Testis (tissue), 5 donors: ENCODE measurements at regions of chr19 and their contacts with region 1.

Region 1: DNA sequence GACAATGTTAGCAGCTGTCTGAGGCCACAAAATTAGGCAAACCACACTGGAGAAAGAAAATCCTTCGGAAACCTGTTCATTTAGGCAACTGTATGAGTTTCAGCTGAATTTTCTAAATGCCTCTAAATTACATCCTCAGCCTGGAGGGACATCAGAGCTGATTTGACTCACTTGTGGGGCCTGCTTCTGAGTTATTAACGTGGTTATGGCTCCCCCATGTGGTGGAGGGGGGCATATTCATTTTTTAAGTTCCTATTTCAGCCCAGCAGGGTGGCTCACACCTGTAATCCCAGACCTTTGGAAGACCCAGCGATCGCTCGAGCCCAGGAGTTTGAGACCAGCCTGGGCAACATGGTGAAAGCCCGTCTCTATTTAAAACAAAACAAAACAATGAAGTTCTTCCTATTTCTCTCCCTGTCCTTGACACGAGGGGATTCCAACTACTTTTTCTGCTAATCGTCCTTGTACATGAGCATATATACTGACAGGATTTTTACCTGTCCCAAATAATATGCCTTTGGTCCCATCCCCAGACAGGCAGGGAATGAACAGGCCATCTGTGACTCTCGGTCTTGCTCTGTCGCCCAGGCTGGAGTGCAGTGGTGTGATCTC is 31.5 kb upstream of the HIF3A start:
- DNase-seq: peak; percentile 82
- H3K4me3 ChIP-seq: no peak overlapping the region
- H3K27ac ChIP-seq: no peak overlapping the region
- H3K4me1 ChIP-seq: no peaks in the 10 kb centered on the region
- H3K27me3 ChIP-seq: no peaks in the 10 kb centered on the region
- CTCF ChIP-seq: peak; percentile 74 to 93 (median 89)
- POLR2A ChIP-seq: no peak

Region 2: DNA sequence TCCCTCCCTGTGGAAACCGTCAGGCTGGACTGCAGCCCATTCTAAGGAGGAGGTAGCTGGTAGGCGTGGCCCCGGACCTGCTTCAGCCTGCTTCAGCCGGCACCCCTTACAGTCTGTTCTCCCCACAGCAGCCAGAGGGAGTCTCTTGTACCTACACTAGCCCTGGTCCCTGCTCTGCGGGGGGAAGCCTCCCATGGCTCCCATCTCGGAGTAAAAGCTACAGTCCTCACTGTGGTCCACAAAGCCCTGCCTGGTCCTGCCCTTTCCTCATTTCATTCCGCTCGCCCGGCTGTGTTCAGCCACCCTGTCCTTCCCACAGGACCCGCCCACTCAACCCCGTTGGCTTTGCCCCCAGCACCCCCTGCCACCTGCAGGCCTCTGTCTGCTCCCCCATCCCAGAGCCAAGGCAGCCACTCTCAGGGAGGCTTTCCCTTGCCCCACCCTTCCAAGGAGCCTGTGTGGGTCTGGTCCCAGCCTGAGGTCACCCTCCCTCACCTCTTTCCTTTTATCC is 243.7 kb before region 1 on chr19:
- intact Hi-C with region 1: loop called (anchors 10 kb)
- DNase-seq: no peak
- H3K4me3 ChIP-seq: no peak overlapping the region
- H3K27ac ChIP-seq: no peak overlapping the region
- H3K4me1 ChIP-seq: no peaks in the 10 kb centered on the region
- H3K27me3 ChIP-seq: no peaks in the 10 kb centered on the region
- CTCF ChIP-seq: no peak
- POLR2A ChIP-seq: no peak

Region 3: DNA sequence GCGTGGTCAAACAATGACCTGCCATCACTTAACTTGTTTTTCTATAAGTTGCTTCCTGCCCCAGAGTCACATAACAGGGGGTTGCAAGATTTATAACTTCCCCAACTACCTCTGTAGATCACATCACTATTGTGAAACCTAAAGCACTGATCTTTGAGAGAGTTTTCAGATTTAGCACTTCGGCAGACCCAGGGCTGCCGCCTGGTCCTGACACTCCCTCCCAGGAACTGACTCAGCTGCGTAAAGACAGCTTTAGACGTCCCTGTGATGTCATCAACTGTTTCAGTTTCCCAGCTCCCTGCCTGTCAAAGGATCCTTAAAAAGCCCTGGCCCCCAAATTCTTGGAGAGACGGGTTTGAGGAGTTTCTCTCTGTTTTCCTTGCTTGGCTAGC is 83.9 kb before region 1 on chr19:
- intact Hi-C with region 1: no loop called
- DNase-seq: no peak
- H3K4me3 ChIP-seq: no peak overlapping the region
- H3K27ac ChIP-seq: no peak overlapping the region
- H3K4me1 ChIP-seq: no peaks in the 10 kb centered on the region
- H3K27me3 ChIP-seq: no peaks in the 10 kb centered on the region
- CTCF ChIP-seq: no peak
- POLR2A ChIP-seq: no peak